Naive thymus-derived CD4-positive, alpha-beta T cell (primary cell): ENCODE measurements at regions of chr10 and their contacts with region 1.

Region 1: DNA sequence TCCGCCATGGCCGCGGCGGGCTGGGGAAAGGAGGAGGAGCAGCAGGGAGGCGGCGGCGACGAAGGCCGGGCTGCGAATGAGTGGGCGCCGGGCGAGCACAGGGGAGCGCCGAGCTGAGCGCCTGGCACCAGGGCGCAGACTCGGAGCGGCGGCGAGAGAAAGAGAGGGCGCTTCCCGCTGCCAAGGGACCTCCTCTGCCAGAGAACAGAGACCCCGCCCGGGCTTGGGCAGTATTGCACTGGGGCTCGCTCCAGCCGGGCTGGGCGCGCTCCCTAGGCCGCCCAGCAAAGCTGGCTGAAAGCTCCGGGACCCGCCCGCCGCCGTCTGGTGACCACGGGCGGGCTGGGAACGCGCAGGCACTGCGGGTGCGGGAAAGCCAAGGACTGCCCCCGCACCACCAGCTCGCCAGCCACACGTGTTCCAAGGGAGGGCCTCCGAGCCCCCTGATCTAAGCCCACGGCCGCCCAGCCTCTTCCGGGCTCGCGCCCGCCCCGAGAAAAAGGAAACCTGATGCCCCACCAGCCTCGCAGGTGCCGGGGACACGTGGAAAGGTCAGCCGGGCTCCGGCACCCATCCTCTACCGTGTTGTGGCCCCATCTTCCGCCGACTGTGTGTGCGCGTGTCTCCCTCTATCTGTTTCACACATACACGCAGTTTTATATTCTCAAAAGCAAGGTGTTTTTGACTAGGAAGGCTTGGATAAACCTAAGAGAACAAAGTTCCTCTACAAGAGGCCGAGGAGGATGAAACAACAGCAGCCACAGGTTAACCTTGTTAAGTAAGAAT is at the start of gene CCDC6:
- DNase-seq: peak; percentile 87 to 92 (median 91)
- ATAC-seq: peak; percentile 92
- H3K4me3 ChIP-seq: peak within 1 kb of the TSS; percentile 72
- H3K4me3 Mint-ChIP-seq: peak within 1 kb of the TSS; percentile 91 to 99 (median 96)
- H3K27ac ChIP-seq: peak within 1 kb of the TSS; percentile 85
- H3K27ac Mint-ChIP-seq: peak within 1 kb of the TSS; percentile 92 to 98 (median 97)
- H3K4me1 ChIP-seq: peaks cover 22 to 36% of the 10 kb centered on the region in 2 donors
- H3K4me1 Mint-ChIP-seq: peaks cover 47 to 71% (median 64%) of the 10 kb centered on the region in 7 donors
- H3K27me3 ChIP-seq: no peaks in the 10 kb centered on the region
- H3K27me3 Mint-ChIP-seq: no peaks in the 10 kb centered on the region
- total RNA-seq, gene CCDC6: 19.7 to 34.3 (median 21.4) TPM

Region 2: GRCh38 chr10:58384999-58385783 is 1521.4 kb before region 1 on chr10 and contains the start of gene TFAM:
- CTCF ChIA-PET with region 1: no interaction called
- POLR2A ChIA-PET with region 1: interaction called, 3 read pairs
- intact Hi-C with region 1: loop called in 1 of 2 experiments (anchors 1 kb)
- DNase-seq: peak; percentile 90 to 97 (median 93)
- ATAC-seq: peak; percentile 91
- H3K4me3 ChIP-seq: peak within 1 kb of the TSS; percentile 95
- H3K4me3 Mint-ChIP-seq: peak within 1 kb of the TSS; percentile 96 to 99 (median 98)
- H3K27ac ChIP-seq: peak within 1 kb of the TSS; percentile 86
- H3K27ac Mint-ChIP-seq: peak within 1 kb of the TSS; percentile 91 to 98 (median 96)
- H3K4me1 ChIP-seq: peaks cover 20 to 30% of the 10 kb centered on the region in 2 donors
- H3K4me1 Mint-ChIP-seq: peaks cover 24 to 61% (median 53%) of the 10 kb centered on the region in 7 donors
- H3K27me3 ChIP-seq: no peaks in the 10 kb centered on the region
- H3K27me3 Mint-ChIP-seq: no peaks in the 10 kb centered on the region
- total RNA-seq, gene TFAM: 33.1 to 63.2 (median 44.8) TPM

Region 3: GRCh38 chr10:59830601-59831259 is 75.9 kb before region 1 on chr10:
- CTCF ChIA-PET with region 1: interaction called, 5 read pairs
- POLR2A ChIA-PET with region 1: no interaction called
- intact Hi-C with region 1: loop called (anchors 1 to 2 kb)
- DNase-seq: peak in 2 of 9 donors; percentile 8 to 18
- ATAC-seq: peak; percentile 64
- H3K4me3 ChIP-seq: no peak overlapping the region
- H3K4me3 Mint-ChIP-seq: no peak overlapping the region
- H3K27ac ChIP-seq: no peak overlapping the region
- H3K27ac Mint-ChIP-seq: no peak overlapping the region
- H3K4me1 ChIP-seq: no peaks in the 10 kb centered on the region
- H3K4me1 Mint-ChIP-seq: peaks cover 32 to 63% (median 48%) of the 10 kb centered on the region in 7 donors
- H3K27me3 ChIP-seq: no peaks in the 10 kb centered on the region
- H3K27me3 Mint-ChIP-seq: no peaks in the 10 kb centered on the region

Region 4: GRCh38 chr10:59885430-59886134 is 21.0 kb before region 1 on chr10:
- CTCF ChIA-PET with region 1: interaction called, 4 read pairs
- POLR2A ChIA-PET with region 1: interaction called, 5 read pairs
- intact Hi-C with region 1: loop called in 1 of 2 experiments (anchors 1 kb)
- DNase-seq: no peak
- ATAC-seq: peak; percentile 70
- H3K4me3 ChIP-seq: no peak overlapping the region
- H3K4me3 Mint-ChIP-seq: peak overlapping the region in 9 of 10 donors; percentile 11 to 66 (median 39)
- H3K27ac ChIP-seq: no peak overlapping the region
- H3K27ac Mint-ChIP-seq: peak overlapping the region in 4 of 9 donors; percentile 40 to 84 (median 62)
- H3K4me1 ChIP-seq: peaks cover 42 to 43% of the 10 kb centered on the region in 2 donors
- H3K4me1 Mint-ChIP-seq: peaks cover 56 to 90% (median 85%) of the 10 kb centered on the region in 7 donors
- H3K27me3 ChIP-seq: no peaks in the 10 kb centered on the region
- H3K27me3 Mint-ChIP-seq: no peaks in the 10 kb centered on the region

Region 5: DNA sequence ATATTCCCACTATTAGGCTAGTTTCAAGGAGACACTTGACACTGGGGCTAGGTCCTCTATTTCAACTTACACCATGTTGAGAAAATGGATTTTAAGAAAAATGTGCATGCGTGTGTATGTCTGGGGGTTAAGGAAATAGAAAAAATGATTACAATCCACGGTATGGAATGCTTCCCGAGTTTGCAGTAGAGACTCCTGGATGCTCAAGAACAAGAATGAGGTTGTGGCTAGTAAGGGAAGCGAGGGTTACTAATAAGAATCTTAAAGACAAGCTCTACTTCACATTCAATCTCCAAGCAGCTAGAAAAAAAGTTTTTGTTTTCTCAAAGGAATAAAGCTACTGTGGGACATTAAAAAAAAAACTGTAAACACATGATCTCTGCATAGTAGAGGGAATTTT is 428.4 kb after region 1 on chr10:
- CTCF ChIA-PET with region 1: no interaction called
- POLR2A ChIA-PET with region 1: no interaction called
- intact Hi-C with region 1: no loop called
- DNase-seq: no peak
- ATAC-seq: no peak
- H3K4me3 ChIP-seq: no peak overlapping the region
- H3K4me3 Mint-ChIP-seq: no peak overlapping the region
- H3K27ac ChIP-seq: no peak overlapping the region
- H3K27ac Mint-ChIP-seq: no peak overlapping the region
- H3K4me1 ChIP-seq: no peaks in the 10 kb centered on the region
- H3K4me1 Mint-ChIP-seq: peaks cover 0 to 6% (median 6%) of the 10 kb centered on the region in 7 donors
- H3K27me3 ChIP-seq: no peaks in the 10 kb centered on the region
- H3K27me3 Mint-ChIP-seq: no peaks in the 10 kb centered on the region

Region 6: DNA sequence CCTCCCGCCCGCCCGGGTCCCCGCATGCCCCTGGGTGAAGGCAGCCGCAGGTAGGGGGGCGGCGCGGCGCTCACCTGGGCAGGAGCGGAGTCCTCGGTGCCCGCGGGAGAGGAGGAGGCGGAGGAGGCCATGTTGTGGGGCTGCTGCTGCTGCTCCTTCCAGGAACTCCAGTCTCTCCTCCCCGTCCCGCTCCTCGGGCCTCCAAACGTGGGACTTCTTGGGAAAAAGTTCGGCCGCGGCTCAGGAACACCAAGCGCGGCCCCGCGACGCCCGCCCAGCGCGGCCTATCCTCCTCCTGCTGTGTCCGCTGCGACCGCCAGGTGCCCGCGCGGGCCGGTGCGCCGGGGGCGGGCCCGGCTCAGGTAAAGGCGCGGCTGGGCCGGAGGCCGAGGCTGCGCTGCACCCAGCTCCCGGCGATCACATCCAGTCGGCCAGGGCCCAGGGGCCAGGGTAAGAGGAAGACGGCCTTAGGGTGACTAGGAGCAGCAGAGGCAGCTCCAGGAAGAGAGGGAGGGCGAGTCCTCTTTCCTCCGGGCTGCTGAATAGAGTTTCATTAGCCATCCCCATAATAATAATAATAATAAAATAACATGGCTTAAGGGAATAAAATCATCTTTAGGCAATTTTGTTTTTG is 826.7 kb after region 1 on chr10:
- CTCF ChIA-PET with region 1: no interaction called
- POLR2A ChIA-PET with region 1: no interaction called
- intact Hi-C with region 1: loop called (anchors 2 to 5 kb)
- DNase-seq: peak; percentile 29 to 66 (median 55)
- ATAC-seq: peak; percentile 80
- H3K4me3 ChIP-seq: peak overlapping the region; percentile 63
- H3K4me3 Mint-ChIP-seq: peak overlapping the region; percentile 59 to 96 (median 80)
- H3K27ac ChIP-seq: peak overlapping the region; percentile 89
- H3K27ac Mint-ChIP-seq: peak overlapping the region in 7 of 9 donors; percentile 33 to 98 (median 58)
- H3K4me1 ChIP-seq: peaks cover 17 to 35% of the 10 kb centered on the region in 2 donors
- H3K4me1 Mint-ChIP-seq: peaks cover 15 to 39% (median 31%) of the 10 kb centered on the region in 7 donors
- H3K27me3 ChIP-seq: no peaks in the 10 kb centered on the region
- H3K27me3 Mint-ChIP-seq: peaks cover 0 to 7% (median 2%) of the 10 kb centered on the region in 5 donors